ENCODE measurements at regions of chr4 and their contacts with region 1.

Region 1: DNA sequence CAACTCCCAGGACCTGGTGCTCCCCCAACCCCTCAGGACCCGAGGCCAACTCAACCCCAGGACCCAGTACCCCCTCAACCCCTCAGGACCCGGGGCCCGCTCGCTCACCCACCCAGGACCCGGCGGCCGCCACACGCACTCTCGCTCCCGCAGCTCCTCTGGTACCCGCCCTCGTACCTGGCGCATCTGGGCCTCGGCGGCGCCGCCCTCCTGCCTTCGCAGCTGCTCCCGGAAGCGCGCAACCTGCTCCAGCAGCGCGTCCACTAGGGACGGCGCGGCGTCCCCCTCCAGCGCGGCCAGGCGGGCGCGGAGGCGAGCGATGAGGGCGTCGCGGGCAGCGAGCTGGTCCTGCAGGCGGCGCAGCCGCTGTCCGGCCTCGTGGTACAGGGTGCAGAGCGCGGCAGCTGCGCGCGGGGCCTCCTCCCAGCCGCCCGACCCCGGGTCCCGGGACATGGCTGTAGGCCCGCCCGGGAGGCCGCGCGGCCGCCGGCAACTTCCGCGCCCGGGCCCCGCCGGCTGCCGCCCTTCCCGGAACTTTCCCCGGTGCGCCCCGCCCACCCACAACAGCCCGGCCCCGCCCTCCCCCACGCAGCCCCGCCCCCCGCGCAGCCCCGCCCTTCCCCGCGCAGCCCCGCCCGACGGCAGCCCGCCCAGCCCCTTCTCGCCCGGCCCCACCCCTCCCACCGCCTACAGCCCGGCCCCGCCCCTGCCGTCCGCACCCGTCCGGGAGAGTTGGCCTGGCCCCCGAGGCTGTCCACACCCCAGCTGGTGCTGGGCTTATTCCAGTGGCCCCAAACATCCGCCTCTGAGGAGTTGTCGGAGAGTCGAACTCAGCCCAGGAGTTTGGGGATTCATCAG is at the start of gene TNIP2:
- DNase-seq: peak; percentile 81
- ATAC-seq: peak; percentile 86
- H3K4me3 Mint-ChIP-seq: peak within 1 kb of the TSS; percentile 81
- H3K27ac Mint-ChIP-seq: peak within 1 kb of the TSS; percentile 57
- H3K4me1 Mint-ChIP-seq: peaks cover 38% of the 10 kb centered on the region
- H3K27me3 Mint-ChIP-seq: no peaks in the 10 kb centered on the region
- CTCF ChIP-seq: no peak
- total RNA-seq, gene TNIP2: 79.1 and 83.2 TPM in 2 replicates

Region 2: GRCh38 chr4:2689825-2690700 is 66.0 kb before region 1 on chr4:
- CTCF ChIA-PET with region 1: no interaction called
- POLR2A ChIA-PET with region 1: interaction called, 13 read pairs
- intact Hi-C with region 1: no loop called
- DNase-seq: peak; percentile 78
- ATAC-seq: peak; percentile 85
- H3K4me3 Mint-ChIP-seq: peak overlapping the region; percentile 75
- H3K27ac Mint-ChIP-seq: peak overlapping the region; percentile 95
- H3K4me1 Mint-ChIP-seq: peaks cover 70% of the 10 kb centered on the region
- H3K27me3 Mint-ChIP-seq: no peaks in the 10 kb centered on the region
- CTCF ChIP-seq: no peak

Region 3: GRCh38 chr4:2696423-2696822 is 59.6 kb before region 1 on chr4:
- CTCF ChIA-PET with region 1: interaction called, 3 read pairs
- POLR2A ChIA-PET with region 1: interaction called, 13 read pairs
- intact Hi-C with region 1: loop called (anchors 2 kb)
- DNase-seq: peak; percentile 72
- ATAC-seq: peak; percentile 90
- H3K4me3 Mint-ChIP-seq: peak overlapping the region; percentile 74
- H3K27ac Mint-ChIP-seq: peak overlapping the region; percentile 96
- H3K4me1 Mint-ChIP-seq: peaks cover 72% of the 10 kb centered on the region
- H3K27me3 Mint-ChIP-seq: no peaks in the 10 kb centered on the region
- CTCF ChIP-seq: no peak

Region 4: GRCh38 chr4:2915789-2916188 is 159.7 kb after region 1 on chr4:
- CTCF ChIA-PET with region 1: no interaction called
- POLR2A ChIA-PET with region 1: interaction called, 3 read pairs
- intact Hi-C with region 1: loop called (anchors 5 kb)
- DNase-seq: no peak
- ATAC-seq: no peak
- H3K4me3 Mint-ChIP-seq: no peak overlapping the region
- H3K27ac Mint-ChIP-seq: peak overlapping the region; percentile 31
- H3K4me1 Mint-ChIP-seq: peaks cover 43% of the 10 kb centered on the region
- H3K27me3 Mint-ChIP-seq: no peaks in the 10 kb centered on the region
- CTCF ChIP-seq: no peak

Measured in activated B cell treated with CpG ODN at 0.5 μM for 24 hours (primary cell).